ENCODE measurements at regions of chr4 and their contacts with region 1.

Region 1: GRCh38 chr4:25367004-25367621 is 9.9 kb upstream of the ANAPC4 start:
- H3K4me3 Mint-ChIP-seq: no peak overlapping the region
- H3K27ac Mint-ChIP-seq: no peak overlapping the region
- H3K4me1 Mint-ChIP-seq: no peaks in the 10 kb centered on the region
- H3K27me3 Mint-ChIP-seq: no peaks in the 10 kb centered on the region

Region 2: GRCh38 chr4:25180524-25181131 is 186.5 kb before region 1 on chr4:
- intact Hi-C with region 1: loop called (anchors 5 kb)
- H3K4me3 Mint-ChIP-seq: no peak overlapping the region
- H3K27ac Mint-ChIP-seq: no peak overlapping the region
- H3K4me1 Mint-ChIP-seq: peaks cover 13% of the 10 kb centered on the region
- H3K27me3 Mint-ChIP-seq: no peaks in the 10 kb centered on the region

Region 3: DNA sequence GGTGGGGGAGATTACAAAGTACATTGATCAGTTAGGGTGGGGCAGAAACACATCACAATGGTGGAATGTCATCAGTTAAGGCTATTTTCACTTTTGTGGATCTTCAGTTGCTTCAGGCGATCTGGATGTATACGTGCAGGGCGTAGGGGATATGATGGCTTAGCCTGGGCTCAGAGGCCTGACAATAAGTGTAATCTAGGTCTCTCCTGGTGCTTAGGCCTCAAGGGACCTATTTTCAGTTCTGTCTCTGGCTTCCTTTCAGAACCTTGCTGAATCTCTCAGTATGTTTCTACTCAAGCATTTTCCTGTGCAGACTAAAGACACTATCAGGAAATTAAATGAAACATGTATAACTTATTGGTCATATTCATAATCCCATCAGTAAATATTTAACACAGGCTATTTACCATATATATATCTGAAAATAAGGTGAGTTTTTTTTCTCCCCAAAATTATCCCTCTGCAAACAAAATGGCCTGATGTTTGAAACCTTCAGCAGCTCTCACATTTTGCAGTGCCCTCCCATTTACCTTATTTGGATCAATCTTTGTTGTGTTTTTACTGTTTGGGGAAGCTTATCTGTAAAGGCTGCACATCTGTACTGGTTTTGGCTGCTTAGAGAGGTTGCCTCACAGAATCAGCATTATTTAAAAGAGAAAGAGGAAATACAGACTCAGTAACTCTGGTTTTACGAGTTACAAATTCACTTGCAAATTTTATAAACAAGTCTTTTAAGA is 56.9 kb before region 1 on chr4:
- intact Hi-C with region 1: no loop called
- H3K4me3 Mint-ChIP-seq: no peak overlapping the region
- H3K27ac Mint-ChIP-seq: peak overlapping the region; percentile 73
- H3K4me1 Mint-ChIP-seq: peaks cover 39% of the 10 kb centered on the region
- H3K27me3 Mint-ChIP-seq: peaks cover 5% of the 10 kb centered on the region